HEK293T (cell line): ENCODE measurements at regions of chr17 and their contacts with region 1.

Region 1: GRCh38 chr17:34361478-34362061 is 1.5 kb downstream of the CCL1 start:
- DNase-seq: peak; percentile 69

Region 2: GRCh38 chr17:34171245-34171818 is 190.2 kb before region 1 on chr17:
- CTCF ChIA-PET with region 1: interaction called, 20 read pairs
- POLR2A ChIA-PET with region 1: no interaction called
- DNase-seq: peak; percentile 56

Region 3: GRCh38 chr17:34199932-34200534 is 161.5 kb before region 1 on chr17:
- CTCF ChIA-PET with region 1: interaction called, 75 read pairs
- POLR2A ChIA-PET with region 1: no interaction called
- DNase-seq: peak; percentile 62

Region 4: GRCh38 chr17:34206569-34206968 is 155.0 kb before region 1 on chr17:
- CTCF ChIA-PET with region 1: interaction called, 75 read pairs
- POLR2A ChIA-PET with region 1: no interaction called
- DNase-seq: no peak